CD8-positive, alpha-beta T cell (primary cell): ENCODE measurements at regions of chr3 and their contacts with region 1.

Region 1: GRCh38 chr3:57244946-57245345 is 17.4 kb downstream of the APPL1 start:
- DNase-seq: no peak
- ATAC-seq: no peak
- H3K4me3 ChIP-seq: no peak overlapping the region
- H3K4me3 Mint-ChIP-seq: no peak overlapping the region
- H3K27ac ChIP-seq: no peak overlapping the region
- H3K27ac Mint-ChIP-seq: no peak overlapping the region
- H3K4me1 ChIP-seq: no peaks in the 10 kb centered on the region
- H3K4me1 Mint-ChIP-seq: no peaks in the 10 kb centered on the region
- H3K27me3 ChIP-seq: no peaks in the 10 kb centered on the region
- H3K27me3 Mint-ChIP-seq: no peaks in the 10 kb centered on the region
- CTCF ChIP-seq: no peak

Region 2: GRCh38 chr3:56683122-56683817 is 561.7 kb before region 1 on chr3 and contains the start of gene TASOR:
- CTCF ChIA-PET with region 1: no interaction called
- POLR2A ChIA-PET with region 1: no interaction called
- intact Hi-C with region 1: no loop called
- DNase-seq: peak; percentile 75 to 93 (median 86)
- ATAC-seq: peak; percentile 83
- H3K4me3 ChIP-seq: peak within 1 kb of the TSS; percentile 89 to 91
- H3K4me3 Mint-ChIP-seq: peak within 1 kb of the TSS; percentile 95
- H3K27ac ChIP-seq: peak within 1 kb of the TSS; percentile 98
- H3K27ac Mint-ChIP-seq: peak within 1 kb of the TSS; percentile 99
- H3K4me1 ChIP-seq: peaks cover 43% of the 10 kb centered on the region
- H3K4me1 Mint-ChIP-seq: peaks cover 36% of the 10 kb centered on the region
- H3K27me3 ChIP-seq: no peaks in the 10 kb centered on the region
- H3K27me3 Mint-ChIP-seq: no peaks in the 10 kb centered on the region
- CTCF ChIP-seq: no peak
- total RNA-seq, gene TASOR: 31.1 to 41.5 TPM

Region 3: GRCh38 chr3:57179580-57180410 is 65.2 kb before region 1 on chr3:
- CTCF ChIA-PET with region 1: no interaction called
- POLR2A ChIA-PET with region 1: no interaction called
- intact Hi-C with region 1: loop called in 1 of 2 experiments (anchors 5 kb)
- DNase-seq: peak in 1 of 9 experiments; percentile 23
- ATAC-seq: no peak
- H3K4me3 ChIP-seq: no peak overlapping the region
- H3K4me3 Mint-ChIP-seq: no peak overlapping the region
- H3K27ac ChIP-seq: no peak overlapping the region
- H3K27ac Mint-ChIP-seq: no peak overlapping the region
- H3K4me1 ChIP-seq: no peaks in the 10 kb centered on the region
- H3K4me1 Mint-ChIP-seq: no peaks in the 10 kb centered on the region
- H3K27me3 ChIP-seq: no peaks in the 10 kb centered on the region
- H3K27me3 Mint-ChIP-seq: peaks cover 10% of the 10 kb centered on the region
- CTCF ChIP-seq: no peak

Region 4: GRCh38 chr3:57309769-57310360 is 64.9 kb after region 1 on chr3:
- CTCF ChIA-PET with region 1: no interaction called
- POLR2A ChIA-PET with region 1: no interaction called
- intact Hi-C with region 1: no loop called
- DNase-seq: no peak
- ATAC-seq: no peak
- H3K4me3 ChIP-seq: no peak overlapping the region
- H3K4me3 Mint-ChIP-seq: no peak overlapping the region
- H3K27ac ChIP-seq: no peak overlapping the region
- H3K27ac Mint-ChIP-seq: no peak overlapping the region
- H3K4me1 ChIP-seq: no peaks in the 10 kb centered on the region
- H3K4me1 Mint-ChIP-seq: no peaks in the 10 kb centered on the region
- H3K27me3 ChIP-seq: no peaks in the 10 kb centered on the region
- H3K27me3 Mint-ChIP-seq: no peaks in the 10 kb centered on the region
- CTCF ChIP-seq: no peak